Dorsolateral prefrontal cortex (tissue), 120 donors: ENCODE measurements at regions of chr3 and their contacts with region 1.

Region 1: DNA sequence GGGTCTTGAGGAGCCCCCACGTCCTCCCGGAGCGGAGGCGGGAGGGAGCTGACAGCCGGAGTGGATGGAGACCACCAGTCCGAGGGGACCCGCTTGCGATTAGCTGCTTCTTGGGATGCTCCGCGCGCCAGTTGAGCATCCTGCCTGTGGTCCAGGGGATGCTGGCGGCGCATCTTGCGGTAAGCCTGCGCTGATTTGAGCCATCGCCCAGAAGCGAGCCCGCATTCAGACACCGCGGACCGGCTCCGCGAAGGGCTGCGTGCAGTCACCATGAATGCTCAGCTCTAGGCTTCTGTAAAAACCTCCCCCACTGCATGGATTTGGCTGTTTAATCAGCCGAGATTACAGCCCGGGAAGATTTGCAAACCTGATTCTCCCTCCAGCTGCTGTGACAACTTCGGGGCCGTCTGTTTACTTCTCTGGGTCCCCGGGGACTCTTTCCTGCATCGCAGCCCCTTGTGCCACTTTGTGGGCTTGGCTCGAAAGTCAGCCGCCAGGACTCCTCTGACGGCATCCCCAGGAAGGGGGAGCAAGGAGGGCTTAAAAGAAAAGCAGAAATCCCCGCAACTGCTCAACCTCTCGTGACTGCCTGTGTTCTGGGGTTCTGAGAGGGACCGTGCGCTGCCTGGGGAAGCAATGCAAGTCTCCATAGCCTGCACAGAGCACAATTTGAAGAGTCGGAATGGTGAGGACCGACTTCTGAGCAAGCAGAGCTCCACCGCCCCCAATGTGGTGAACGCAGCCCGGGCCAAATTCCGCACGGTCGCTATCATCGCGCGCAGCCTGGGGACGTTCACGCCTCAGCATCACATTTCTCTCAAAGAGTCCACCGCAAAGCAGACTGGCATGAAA is 171.1 kb downstream of the KCNAB1 start:
- DNase-seq: peak; percentile 32 to 71 (median 53)
- H3K4me3 ChIP-seq: peak overlapping the region; percentile 36 to 82 (median 70)
- H3K27ac ChIP-seq: peak overlapping the region in 56 of 59 donors; percentile 31 to 91 (median 77)
- H3K27me3 ChIP-seq: peaks cover 0 to 9% (median 0%) of the 10 kb centered on the region in 45 donors
- CTCF ChIP-seq: peak in 1 of 56 donors; percentile 7

Region 2: DNA sequence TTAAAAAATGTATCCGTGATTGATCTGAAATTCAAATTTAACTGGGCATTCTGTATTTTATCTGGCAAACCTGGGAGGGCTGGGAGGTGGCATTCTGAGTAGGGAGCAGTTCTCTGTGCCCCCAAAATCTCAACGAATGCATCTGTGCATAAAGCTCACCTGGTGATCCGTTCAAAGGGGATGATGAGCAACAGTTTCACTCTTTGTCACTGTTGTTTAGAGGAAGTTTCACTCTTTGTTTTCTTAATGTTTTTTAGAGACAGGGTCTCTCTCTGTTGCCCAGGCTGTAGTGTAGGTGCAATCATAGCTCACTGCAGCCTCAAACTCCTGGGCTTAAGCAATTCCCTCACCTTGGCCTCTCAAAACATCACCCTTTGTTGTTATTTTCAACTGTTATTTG is 76.7 kb after region 1 on chr3:
- intact Hi-C with region 1: no loop called
- DNase-seq: no peak
- H3K4me3 ChIP-seq: no peak overlapping the region
- H3K27ac ChIP-seq: no peak overlapping the region
- H3K27me3 ChIP-seq: no peaks in the 10 kb centered on the region
- CTCF ChIP-seq: no peak

Region 3: DNA sequence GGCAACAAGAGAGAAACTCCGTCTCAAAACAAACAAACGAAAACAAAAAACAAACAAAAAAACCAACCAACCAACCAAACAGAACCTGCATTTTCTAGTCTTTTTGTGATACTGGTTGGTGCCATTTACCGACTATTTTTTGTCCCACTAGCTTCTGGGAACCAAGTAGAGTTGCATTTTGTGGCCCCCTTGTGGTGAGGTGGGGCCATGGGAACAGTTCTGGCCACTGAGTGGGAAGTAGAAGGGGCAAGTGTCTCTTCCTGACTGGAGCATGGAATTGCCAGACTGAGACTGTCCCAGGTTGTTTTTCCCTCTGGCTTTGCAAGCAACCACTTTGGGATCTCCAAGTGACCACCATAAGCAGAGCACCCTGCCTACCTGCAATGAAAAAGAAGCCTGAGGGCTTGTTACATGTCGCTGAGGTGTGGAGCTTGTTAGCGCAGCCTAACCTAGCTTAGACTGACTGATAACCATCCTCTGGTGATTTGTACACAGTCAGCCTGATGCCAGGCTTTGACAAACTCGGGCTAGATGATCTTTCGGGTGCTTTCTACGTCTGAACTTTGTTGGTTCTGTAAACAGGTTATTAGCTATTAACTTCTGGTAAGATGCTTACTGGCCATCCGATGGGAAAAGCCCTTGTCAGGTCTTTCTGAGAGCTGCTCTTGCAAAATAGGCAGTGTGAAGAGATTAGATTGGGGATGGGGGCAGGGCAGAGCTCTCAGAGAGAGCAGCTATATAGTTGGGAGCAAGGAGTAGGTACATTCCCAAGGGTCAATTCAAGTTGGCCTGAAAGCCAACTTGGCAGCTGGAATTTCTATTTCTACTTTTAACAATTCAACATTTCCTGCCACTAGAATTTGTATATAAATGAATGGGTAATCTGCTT is 91.2 kb after region 1 on chr3:
- intact Hi-C with region 1: loop called in 1 of 2 experiments (anchors 10 kb)
- DNase-seq: no peak
- H3K4me3 ChIP-seq: no peak overlapping the region
- H3K27ac ChIP-seq: peak overlapping the region in 17 of 59 donors; percentile 3 to 53 (median 33)
- H3K27me3 ChIP-seq: no peaks in the 10 kb centered on the region
- CTCF ChIP-seq: peak in 50 of 56 donors; percentile 14 to 63 (median 38)

Region 4: DNA sequence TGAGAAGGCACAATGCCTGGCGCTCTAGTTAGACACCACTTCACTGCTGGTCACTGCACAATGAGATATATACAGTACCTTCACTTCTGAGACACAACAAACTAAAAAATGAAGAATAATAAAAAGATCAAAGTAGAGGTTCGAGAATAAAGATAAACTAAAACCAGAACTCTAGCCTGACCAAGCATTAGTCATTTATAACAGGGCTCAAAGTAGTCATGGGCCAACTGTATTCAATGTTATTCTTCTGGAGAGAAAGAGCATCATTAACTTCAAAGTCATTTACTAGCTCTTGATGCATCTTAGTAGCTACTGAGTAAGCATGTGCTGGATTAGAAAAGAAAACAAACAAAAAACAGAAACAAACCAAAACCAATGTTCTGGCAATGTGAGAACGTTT is 118.2 kb after region 1 on chr3:
- intact Hi-C with region 1: loop called in 1 of 2 experiments (anchors 10 kb)
- DNase-seq: no peak
- H3K4me3 ChIP-seq: no peak overlapping the region
- H3K27ac ChIP-seq: no peak overlapping the region
- H3K27me3 ChIP-seq: no peaks in the 10 kb centered on the region
- CTCF ChIP-seq: no peak

Region 5: DNA sequence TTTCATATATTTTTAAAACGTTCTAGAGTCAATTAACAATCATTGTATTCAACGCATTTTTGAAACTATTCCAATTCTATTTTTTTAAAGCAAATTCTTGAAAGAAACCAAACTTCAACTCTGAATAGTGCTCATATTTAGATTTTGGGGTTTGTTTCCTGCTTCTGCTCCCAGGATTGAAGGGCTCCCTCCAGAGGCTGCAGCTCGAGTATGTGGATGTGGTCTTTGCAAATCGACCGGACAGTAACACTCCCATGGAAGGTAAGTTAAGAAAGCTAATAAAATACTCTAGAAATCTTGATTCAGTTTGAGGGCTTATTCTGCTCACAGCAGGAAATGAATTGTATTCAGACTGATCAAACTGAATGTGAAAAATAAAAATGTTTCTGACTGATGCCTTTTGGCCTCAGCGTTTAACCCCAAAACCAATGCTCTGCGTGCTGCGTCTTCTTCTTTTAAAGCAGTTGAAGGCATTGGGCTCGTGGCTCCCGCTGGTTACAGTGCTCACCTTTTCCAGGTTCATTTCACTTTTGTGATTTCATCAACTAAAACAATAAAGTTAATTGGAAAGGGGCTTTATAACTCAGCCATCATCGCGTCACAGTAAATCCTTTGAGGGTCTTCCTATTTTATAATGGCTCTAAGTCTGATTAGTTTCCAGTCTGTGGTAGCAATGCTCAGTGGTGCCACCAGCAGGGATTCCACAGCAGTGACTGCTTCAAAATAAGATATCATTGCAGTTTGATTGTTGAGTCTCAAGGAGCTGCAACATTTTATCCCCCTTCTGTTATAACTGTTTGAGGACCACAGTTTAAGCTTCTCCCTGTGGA is 183.3 kb after region 1 on chr3:
- intact Hi-C with region 1: loop called in 1 of 2 experiments (anchors 10 kb)
- DNase-seq: peak in 1 of 10 donors; percentile 23
- H3K4me3 ChIP-seq: peak overlapping the region in 5 of 59 donors; percentile 1 to 40 (median 9)
- H3K27ac ChIP-seq: no peak overlapping the region
- H3K27me3 ChIP-seq: no peaks in the 10 kb centered on the region
- CTCF ChIP-seq: peak in 47 of 56 donors; percentile 6 to 57 (median 38)